Posterior cingulate gyrus (tissue), 11 donors: ENCODE measurements at regions of chr2 and their contacts with region 1.

Region 1: DNA sequence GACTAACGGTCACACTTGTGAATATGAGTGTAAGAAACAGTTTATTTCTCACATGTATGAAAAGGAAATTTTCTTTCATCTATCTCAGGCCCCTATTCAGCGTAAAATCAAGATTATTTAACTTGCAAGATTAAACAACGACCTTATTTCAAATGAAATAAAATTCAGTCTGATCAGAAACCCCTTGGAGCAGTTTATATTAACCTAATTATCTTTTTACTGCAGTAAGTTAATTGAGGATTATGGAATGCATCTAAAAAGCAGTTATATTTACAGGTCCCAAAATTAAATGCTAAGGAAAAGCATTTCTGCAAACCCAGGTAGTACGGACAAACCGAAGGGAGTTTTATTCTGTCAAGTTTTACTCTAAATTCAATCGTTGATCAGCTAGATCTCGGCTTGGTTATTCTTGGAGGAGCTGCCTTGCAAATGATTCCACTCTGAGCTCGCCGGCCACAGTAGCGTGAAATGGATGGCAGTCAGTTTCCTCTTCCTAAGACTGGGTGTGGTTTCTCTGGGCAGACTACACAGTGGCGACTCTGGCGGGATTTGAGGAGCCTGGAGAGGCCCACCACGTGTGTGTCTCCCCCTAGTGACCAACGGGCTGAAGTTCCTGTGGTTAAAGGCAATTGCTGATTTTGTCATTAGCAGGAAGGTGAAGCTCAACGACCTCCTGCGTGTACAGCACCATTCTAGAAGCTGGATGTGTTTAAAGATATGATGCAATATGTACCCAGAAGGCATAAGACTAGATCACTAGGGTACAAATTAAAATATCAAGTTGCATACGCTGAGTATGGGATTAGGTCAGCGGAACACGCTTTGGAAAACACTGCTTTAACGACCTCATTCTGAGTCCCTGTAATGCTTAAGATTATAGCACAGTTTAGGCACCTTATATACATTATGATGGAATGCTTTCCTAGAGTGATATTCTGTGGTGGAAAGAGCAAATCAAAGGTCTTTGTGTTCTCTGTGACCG is 36.4 kb downstream of the PRKRA start:
- DNase-seq: peak; percentile 68 to 97 (median 87)

Region 2: DNA sequence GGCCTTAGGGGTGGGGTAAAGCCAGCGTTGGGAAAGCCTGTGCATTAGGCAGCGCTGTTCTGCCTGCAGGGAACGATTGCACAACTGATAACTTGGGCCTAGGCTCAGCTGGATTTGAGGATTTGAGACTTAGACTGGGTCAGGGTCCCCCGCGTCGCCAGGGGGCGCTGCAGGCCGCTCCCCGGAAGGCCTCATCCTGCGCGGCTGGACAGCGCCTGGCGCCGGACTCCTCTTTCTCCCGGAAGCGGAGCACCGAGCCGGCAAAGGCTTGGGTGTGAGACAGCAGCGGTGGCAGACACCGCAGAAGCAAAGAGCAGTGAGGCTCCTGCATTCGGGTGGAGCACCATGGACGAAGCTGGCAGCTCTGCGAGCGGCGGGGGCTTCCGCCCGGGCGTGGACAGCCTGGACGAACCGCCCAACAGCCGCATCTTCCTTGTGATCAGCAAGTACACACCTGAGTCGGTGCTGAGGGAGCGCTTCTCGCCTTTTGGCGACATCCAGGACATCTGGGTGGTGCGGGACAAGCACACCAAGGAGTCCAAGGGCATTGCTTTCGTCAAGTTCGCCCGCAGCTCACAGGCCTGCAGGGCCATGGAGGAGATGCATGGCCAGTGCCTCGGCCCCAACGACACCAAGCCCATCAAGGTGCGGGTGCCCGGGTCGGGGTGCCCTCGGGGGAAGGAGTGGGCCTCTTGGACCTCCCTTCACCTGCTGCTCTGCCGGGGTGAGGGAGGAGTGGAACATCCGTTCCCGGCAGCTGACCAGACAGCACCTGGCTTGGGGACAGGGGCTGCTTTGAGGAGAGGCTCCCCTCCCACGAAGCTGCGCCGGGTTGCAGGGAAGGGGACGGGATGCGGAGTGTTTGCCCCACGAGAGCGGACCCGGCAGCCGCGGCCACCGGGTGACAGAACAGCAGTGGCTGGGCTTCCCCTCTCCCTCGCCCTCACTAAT is 302.1 kb before region 1 on chr2 and contains the start of gene RBM45:
- intact Hi-C with region 1: loop called (anchors 5 kb)
- DNase-seq: peak; percentile 77 to 98 (median 88)

Region 3: DNA sequence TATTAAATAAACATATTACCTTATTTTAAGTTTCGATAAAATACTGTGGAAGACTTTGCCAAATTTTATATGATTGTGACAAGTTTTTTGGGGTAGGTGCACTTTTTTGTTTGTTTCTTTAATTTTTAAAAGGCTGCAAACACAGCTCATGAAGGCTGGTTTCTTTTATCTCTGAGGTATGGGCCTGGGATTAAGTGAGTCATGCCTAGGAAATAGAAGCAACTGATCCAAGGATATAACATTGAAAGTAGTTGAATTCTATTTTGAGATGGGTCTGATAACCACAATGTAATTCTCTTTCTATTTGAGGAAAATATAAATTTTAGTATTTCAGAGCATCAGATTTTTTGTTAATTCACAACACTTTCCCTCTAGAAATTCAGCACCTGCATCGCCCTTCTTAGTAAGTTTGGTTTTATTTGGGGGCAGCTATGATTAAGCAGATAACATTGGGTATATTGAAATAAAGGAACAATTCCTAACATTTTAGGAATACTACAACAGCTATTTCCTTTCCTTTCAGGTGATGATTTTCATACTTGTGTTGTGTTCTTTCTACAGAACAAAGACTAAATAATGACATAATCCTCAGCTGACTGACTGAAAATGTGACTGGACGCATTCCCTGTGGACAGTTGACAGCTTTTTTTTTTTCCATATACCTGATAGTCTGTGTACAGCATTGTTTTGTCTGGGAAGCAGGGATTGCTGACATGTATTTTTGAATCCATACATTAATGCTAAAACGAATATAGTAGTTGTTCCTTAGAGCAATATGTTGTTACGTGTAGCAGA is 285.5 kb before region 1 on chr2:
- intact Hi-C with region 1: loop called (anchors 5 kb)
- DNase-seq: no peak

Region 4: GRCh38 chr2:178163395-178163794 is 251.2 kb before region 1 on chr2:
- intact Hi-C with region 1: no loop called
- DNase-seq: no peak

Region 5: GRCh38 chr2:178193823-178194599 is 220.5 kb before region 1 on chr2 and contains the start of gene OSBPL6:
- intact Hi-C with region 1: loop called (anchors 10 kb)
- DNase-seq: peak; percentile 60 to 97 (median 82)